ENCODE measurements at regions of chr9 and their contacts with region 1.

Region 1: DNA sequence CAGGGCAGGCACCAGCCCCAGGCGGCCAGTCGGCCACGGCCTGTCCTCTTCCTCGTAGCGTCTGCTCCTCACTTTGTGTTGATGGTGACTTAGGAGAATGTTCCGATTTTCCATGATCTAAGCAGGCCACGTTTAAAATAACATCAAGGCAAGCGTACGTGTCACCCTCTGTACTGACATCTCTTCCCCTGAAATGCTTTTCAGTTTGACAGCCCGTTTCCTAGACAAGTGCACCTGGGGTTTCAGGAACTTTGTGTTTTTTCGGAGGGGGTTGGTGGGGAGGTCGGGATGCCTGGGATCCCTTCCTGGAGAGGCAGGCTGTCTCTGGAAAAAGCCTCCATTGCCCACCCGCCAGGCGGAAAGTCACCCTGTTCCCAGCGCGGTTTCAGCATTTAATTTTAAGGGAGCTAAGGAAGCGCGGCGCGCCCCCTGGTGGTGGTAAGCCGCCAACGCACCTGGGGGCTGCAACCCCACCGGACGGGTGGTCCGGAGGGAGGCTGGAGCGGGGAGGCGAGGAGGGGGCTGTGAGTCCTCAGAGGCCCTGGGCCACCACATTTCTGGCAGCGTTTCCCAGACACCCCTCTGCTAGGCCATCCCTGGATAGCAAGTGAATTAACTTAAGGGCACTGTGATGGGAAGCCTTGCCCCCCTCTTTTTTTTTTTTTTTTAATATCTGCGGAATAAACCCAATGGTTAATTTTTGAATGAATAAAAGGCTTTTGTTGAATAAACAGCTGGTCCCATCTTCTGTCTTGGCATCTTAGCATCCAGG is 29.5 kb upstream of the HMCN2 start:
- DNase-seq: peak; percentile 13
- H3K4me3 ChIP-seq: no peak overlapping the region
- H3K27ac ChIP-seq: no peak overlapping the region
- H3K27me3 ChIP-seq: no peaks in the 10 kb centered on the region
- CTCF ChIP-seq: peak; percentile 98

Region 2: GRCh38 chr9:130205912-130206311 is 30.2 kb before region 1 on chr9:
- CTCF ChIA-PET with region 1: interaction called, 10 read pairs
- POLR2A ChIA-PET with region 1: no interaction called
- DNase-seq: no peak
- H3K4me3 ChIP-seq: no peak overlapping the region
- H3K27ac ChIP-seq: no peak overlapping the region
- H3K27me3 ChIP-seq: no peaks in the 10 kb centered on the region
- CTCF ChIP-seq: no peak

Region 3: GRCh38 chr9:130254752-130255630 is 18.9 kb after region 1 on chr9:
- CTCF ChIA-PET with region 1: interaction called, 13 read pairs
- POLR2A ChIA-PET with region 1: no interaction called
- DNase-seq: no peak
- H3K4me3 ChIP-seq: no peak overlapping the region
- H3K27ac ChIP-seq: no peak overlapping the region
- H3K27me3 ChIP-seq: peaks cover 31% of the 10 kb centered on the region
- CTCF ChIP-seq: no peak

Measured in AG04450 (cell line).